ENCODE measurements at regions of chr15 and their contacts with region 1.

Region 1: DNA sequence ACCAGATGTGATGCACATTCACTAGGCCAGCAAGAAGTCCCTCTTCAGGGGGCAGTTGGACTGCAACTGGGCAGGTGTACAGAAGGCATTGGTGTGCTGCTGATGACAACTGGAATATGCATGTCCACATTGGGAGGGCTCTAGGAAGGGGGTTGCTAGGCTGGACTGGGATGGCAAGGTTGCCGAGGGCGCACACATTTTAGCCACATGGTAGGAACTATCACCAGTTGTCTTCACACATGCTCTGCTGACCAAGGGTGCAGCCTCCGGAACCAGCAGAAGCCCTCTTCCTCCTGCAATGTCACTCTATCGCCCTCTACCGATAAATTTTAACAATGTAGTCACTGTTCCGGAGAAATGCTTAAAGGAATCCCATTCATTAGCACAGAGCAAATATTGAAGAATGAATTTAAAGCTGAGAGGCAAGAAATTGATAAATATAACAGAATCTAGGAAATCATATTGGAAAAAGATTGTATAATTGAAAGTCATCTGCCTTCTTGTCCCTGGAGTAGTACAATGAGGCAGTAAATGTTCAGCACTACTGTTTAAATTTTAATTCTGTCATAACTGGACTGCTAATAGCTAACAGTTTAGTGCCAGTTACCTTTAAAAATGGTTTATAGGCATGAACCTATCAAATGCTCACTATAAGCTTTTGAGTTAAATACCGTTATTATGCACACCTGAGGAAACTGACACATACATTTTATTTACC is 22.6 kb upstream of the LYSMD4 start:
- DNase-seq: peak; percentile 22
- H3K4me3 Mint-ChIP-seq: no peak overlapping the region
- H3K27ac Mint-ChIP-seq: no peak overlapping the region
- H3K4me1 Mint-ChIP-seq: no peaks in the 10 kb centered on the region
- H3K27me3 Mint-ChIP-seq: peaks cover 7% of the 10 kb centered on the region

Region 2: DNA sequence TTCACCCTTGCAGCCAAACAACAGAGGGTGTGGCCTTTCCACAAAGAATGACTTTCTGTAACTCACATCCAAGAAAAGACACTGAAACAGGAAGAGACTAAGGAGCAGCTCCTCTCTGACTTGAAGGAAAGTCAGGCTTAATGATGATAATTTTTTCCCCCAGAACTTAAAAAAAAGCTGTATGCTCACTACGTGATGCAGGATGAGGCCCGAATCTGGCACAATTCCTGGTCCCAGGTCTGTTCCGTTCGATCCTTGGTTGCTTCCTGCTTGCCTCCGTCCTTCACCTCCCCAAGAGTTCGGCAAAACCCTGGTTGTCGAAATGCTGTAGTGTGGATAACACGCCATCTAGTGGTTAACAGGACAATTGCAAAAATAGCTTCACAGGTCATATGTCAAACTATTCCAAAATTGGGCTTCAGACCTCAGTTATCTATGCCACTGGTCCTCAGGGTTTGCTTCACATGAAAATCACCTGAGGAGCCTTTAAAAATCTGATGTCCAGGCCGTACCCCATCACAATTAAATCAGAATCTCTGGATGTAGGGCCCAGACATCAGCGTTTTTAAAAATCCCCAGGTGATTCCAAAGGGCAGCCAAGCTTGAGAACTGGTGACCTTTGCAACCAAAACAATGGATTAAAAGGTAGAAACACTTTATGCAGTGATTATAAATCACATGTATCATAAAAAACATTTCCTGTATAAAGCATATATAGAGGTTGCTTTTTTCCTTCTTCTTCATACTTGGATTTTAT is 679.1 kb before region 1 on chr15:
- intact Hi-C with region 1: no loop called
- DNase-seq: peak; percentile 24
- H3K4me3 Mint-ChIP-seq: peak overlapping the region; percentile 73
- H3K27ac Mint-ChIP-seq: no peak overlapping the region
- H3K4me1 Mint-ChIP-seq: peaks cover 2% of the 10 kb centered on the region
- H3K27me3 Mint-ChIP-seq: peaks cover 22% of the 10 kb centered on the region

Region 3: DNA sequence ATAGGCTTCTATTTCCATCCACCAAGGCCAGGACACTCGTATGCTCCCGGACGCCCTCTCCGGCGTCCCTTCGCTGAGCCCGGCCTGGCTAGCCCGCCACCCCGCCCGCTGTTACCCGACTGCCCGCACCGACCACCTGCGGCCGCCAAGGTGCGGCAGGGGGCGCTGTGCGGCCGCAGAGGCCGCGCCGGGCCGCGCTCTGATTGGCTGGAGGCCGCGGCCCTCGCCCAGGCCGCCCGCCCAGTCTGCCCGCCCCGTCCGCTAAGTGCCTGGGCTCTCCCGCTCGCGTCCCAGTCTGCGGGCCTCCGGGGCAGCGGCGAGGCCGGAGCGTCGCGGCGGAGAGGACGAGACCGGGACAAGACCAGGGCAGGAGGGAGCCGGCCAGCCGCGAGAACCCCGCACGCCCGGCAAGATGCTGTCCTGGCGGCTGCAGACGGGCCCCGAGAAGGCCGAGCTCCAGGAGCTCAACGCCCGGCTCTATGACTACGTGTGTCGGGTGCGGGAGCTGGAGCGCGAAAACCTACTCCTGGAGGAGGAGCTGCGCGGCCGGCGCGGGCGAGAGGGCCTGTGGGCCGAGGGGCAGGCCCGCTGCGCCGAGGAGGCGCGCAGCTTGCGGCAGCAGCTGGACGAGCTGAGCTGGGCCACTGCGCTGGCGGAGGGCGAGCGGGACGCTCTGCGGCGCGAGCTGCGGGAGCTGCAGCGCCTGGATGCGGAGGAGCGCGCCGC is 650.9 kb before region 1 on chr15 and contains the start of gene SYNM:
- intact Hi-C with region 1: loop called (anchors 10 kb)
- DNase-seq: peak; percentile 22
- H3K4me3 Mint-ChIP-seq: peak within 1 kb of the TSS; percentile 57
- H3K27ac Mint-ChIP-seq: no peak within 1 kb of the TSS
- H3K4me1 Mint-ChIP-seq: peaks cover 12% of the 10 kb centered on the region
- H3K27me3 Mint-ChIP-seq: peaks cover 55% of the 10 kb centered on the region
- total RNA-seq, gene SYNM: 0.46 and 0.55 TPM in 2 replicates

Region 4: GRCh38 chr15:99273801-99274200 is 482.1 kb before region 1 on chr15:
- intact Hi-C with region 1: loop called (anchors 2 kb)
- DNase-seq: no peak
- H3K4me3 Mint-ChIP-seq: no peak overlapping the region
- H3K27ac Mint-ChIP-seq: no peak overlapping the region
- H3K4me1 Mint-ChIP-seq: peaks cover 14% of the 10 kb centered on the region
- H3K27me3 Mint-ChIP-seq: no peaks in the 10 kb centered on the region

Region 5: GRCh38 chr15:99282121-99282520 is 473.7 kb before region 1 on chr15:
- intact Hi-C with region 1: loop called (anchors 1 kb)
- DNase-seq: no peak
- H3K4me3 Mint-ChIP-seq: no peak overlapping the region
- H3K27ac Mint-ChIP-seq: no peak overlapping the region
- H3K4me1 Mint-ChIP-seq: peaks cover 46% of the 10 kb centered on the region
- H3K27me3 Mint-ChIP-seq: no peaks in the 10 kb centered on the region

Region 6: DNA sequence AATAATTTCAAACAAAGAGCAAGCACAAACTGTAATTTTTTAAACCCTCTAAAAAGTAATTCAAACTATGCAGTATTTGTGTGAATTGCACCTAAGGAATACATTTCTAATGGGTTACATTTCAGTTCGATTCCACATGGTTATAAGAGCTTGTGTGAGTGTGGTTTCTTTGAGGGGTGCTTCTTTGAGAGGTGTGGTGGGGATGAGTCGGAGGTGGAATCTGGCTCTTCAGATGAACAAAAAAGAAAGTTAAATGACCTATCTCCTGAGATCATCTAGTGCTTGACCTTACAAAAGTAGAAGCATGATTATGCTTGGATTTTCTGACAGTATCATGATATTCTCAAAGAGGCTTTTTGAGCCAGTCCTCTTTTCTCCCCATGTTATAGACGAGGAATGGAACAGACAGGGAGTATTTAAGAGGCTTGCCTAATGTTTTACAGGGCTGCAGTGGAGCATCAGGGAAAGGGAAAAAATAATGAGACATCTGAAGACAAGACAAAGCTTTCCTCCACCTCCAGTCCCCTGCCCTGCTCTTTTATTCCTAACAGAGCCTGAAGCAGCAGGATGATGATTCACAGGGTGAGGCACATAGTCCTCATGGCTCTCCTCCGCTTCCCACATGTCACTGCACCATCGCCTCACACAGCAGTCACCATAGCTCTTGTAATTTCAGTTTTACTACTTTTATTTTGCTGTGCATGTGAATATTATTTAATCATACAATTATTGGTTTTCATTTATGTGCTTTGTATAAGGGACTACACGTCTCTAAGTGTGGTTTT is 104.6 kb before region 1 on chr15:
- intact Hi-C with region 1: no loop called
- DNase-seq: no peak
- H3K4me3 Mint-ChIP-seq: no peak overlapping the region
- H3K27ac Mint-ChIP-seq: peak overlapping the region; percentile 21
- H3K4me1 Mint-ChIP-seq: peaks cover 15% of the 10 kb centered on the region
- H3K27me3 Mint-ChIP-seq: no peaks in the 10 kb centered on the region

Measured in activated T-helper 2 cell treated with anti-CD3 and anti-CD28 coated beads, Interferon-gamma antibody, Interleukin-2, Interleukin-4, amounts not matched to agents 10 μg/mL and 5 μg/mL and 100 μg/mL, durations not matched to agents 14 hours and 24 hours and 36 hours (primary cell).